Activated T-helper 2 cell treated with anti-CD3 and anti-CD28 coated beads, Interferon-gamma antibody, Interleukin-2, Interleukin-4, amounts not matched to agents 10 μg/mL and 5 μg/mL and 100 μg/mL, durations not matched to agents 14 hours and 24 hours and 36 hours (primary cell): ENCODE measurements at regions of chr14 and their contacts with region 1.

Region 1: DNA sequence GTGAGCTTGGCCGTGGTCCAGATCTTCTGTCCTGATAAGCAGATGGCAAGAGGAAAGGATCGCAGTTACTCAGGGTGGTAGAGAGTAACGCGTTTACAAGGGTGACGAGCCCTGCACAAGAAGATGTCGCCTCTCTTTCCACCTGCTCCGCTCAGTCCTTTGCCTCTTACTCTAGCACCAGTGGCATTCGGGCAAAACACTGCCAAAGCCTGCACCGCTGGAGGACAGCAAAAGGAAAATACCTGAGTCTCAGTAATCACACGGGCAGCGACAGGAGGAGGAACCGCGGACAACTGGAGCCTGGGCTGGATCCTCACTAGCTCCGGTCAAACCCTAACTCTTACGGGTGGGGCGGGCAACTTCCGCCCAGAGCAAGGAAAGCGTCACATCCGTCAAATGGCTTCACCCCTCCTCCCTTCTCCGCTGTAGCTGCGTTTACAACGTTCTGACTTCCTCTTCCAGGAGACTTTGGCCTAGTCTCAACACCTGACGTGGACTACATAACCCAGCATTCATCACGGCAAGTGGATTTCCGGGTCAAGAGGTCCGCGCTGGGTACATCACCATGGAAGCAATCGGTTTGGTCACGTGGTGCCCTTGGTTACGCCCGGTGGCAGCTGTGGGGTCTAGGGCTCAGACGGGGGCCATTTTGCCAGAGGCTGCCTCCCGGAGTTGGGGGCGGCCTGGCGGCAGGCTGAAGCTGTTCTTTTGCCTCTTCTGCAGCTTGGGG is at the starts of genes KLHL28 and TOGARAM1:
- DNase-seq: peak; percentile 95
- H3K4me3 Mint-ChIP-seq: no peak within 1 kb of the TSS
- H3K27ac Mint-ChIP-seq: no peak within 1 kb of the TSS
- H3K4me1 Mint-ChIP-seq: peaks cover 40% of the 10 kb centered on the region
- H3K27me3 Mint-ChIP-seq: no peaks in the 10 kb centered on the region
- total RNA-seq, gene KLHL28: 17.3 and 17.4 TPM in 2 replicates
- total RNA-seq, gene TOGARAM1: 7.3 and 11.1 TPM in 2 replicates

Region 2: DNA sequence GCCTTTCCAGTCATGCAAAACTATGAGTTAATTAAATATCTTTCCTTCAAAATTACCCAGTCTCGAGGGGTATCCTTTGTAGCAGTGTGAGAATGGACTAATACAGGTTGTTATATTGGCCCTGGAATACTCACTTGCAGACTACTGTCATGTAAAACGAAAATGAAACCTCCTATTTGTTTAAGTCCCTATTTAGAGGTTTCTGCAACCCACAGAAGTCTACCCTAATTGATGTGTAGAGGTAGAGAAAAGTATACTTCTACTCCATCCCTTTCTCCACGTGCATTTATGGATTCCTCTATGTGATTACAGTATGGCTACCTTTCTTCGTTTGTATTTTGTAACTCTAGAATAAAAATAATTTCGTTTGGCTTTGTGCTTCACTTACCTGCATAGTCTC is 825.8 kb before region 1 on chr14:
- intact Hi-C with region 1: no loop called
- DNase-seq: no peak
- H3K4me3 Mint-ChIP-seq: no peak overlapping the region
- H3K27ac Mint-ChIP-seq: no peak overlapping the region
- H3K4me1 Mint-ChIP-seq: no peaks in the 10 kb centered on the region
- H3K27me3 Mint-ChIP-seq: no peaks in the 10 kb centered on the region

Region 3: GRCh38 chr14:44897045-44897844 is 64.5 kb before region 1 on chr14:
- intact Hi-C with region 1: loop called (anchors 1 kb)
- DNase-seq: peak; percentile 86
- H3K4me3 Mint-ChIP-seq: peak overlapping the region; percentile 92
- H3K27ac Mint-ChIP-seq: peak overlapping the region; percentile 92
- H3K4me1 Mint-ChIP-seq: peaks cover 13% of the 10 kb centered on the region
- H3K27me3 Mint-ChIP-seq: no peaks in the 10 kb centered on the region

Region 4: GRCh38 chr14:44945264-44945663 is 16.5 kb before region 1 on chr14:
- intact Hi-C with region 1: loop called (anchors 2 kb)
- DNase-seq: no peak
- H3K4me3 Mint-ChIP-seq: no peak overlapping the region
- H3K27ac Mint-ChIP-seq: no peak overlapping the region
- H3K4me1 Mint-ChIP-seq: peaks cover 20% of the 10 kb centered on the region
- H3K27me3 Mint-ChIP-seq: no peaks in the 10 kb centered on the region

Region 5: GRCh38 chr14:44982594-44982993 is 20.8 kb after region 1 on chr14:
- intact Hi-C with region 1: loop called (anchors 2 kb)
- DNase-seq: no peak
- H3K4me3 Mint-ChIP-seq: no peak overlapping the region
- H3K27ac Mint-ChIP-seq: peak overlapping the region; percentile 26
- H3K4me1 Mint-ChIP-seq: peaks cover 16% of the 10 kb centered on the region
- H3K27me3 Mint-ChIP-seq: no peaks in the 10 kb centered on the region

Region 6: DNA sequence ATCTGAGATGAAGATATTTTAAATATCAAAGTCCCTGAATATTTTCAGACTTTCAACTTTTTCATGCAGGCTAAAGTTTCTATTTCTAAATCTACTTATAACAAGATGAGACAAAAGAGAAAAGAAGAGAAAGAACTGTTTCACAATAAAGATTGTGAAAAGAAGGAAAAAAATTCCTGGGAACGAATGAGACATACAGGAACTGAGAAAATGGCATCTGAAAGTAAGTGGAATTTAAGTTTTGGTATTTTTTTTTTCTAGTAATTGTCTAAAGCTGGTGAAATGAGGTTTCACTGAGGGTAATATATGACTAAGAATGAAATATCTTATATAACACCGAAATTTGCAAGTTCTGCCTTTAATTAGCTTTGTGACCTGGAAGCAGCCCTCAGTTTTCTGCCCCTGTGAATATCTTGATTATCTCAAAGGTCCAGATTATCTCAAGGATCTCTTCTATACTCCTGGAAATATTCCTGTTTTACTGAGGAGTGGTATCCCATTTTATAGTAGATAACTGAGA is 66.4 kb after region 1 on chr14:
- intact Hi-C with region 1: no loop called
- DNase-seq: no peak
- H3K4me3 Mint-ChIP-seq: no peak overlapping the region
- H3K27ac Mint-ChIP-seq: no peak overlapping the region
- H3K4me1 Mint-ChIP-seq: peaks cover 3% of the 10 kb centered on the region
- H3K27me3 Mint-ChIP-seq: no peaks in the 10 kb centered on the region

Region 7: DNA sequence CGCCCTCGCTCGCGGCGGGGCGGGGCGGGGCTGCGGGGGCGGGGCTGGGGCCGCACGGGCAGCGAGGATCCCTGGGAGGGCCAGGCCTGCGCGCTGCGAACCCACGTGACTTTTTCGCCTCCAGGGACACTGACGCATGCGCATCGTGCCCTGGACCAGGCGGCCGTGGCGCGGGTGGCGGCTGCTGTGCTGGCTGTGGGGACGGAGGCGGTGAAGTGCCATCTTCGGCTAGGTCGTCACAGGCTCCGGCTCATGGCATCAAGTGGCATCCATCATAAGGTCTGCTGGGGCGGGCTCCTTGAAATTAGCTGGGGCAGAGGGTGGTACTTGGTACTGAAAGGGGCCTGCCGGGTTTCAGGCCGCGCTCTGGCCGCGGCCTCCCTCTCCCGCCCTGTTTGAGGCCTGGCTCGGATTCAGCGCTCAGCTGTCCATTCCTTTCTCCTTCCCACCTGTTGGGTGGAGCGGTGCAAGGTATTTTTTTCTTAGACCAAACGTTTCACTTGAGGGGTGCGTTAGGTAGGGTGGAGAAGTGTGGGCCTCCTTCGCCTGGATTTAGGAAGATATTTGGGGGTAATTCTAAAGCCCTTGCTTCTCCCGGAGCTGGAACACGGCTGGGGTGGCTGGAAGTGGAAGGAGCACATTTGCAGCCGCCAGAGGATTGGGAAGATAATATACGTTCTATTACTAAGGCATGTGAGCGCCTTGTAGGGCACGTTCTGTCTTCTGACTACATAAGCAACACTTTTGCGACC is 122.4 kb after region 1 on chr14 and contains the start of gene PRPF39:
- intact Hi-C with region 1: loop called (anchors 1 kb)
- DNase-seq: peak; percentile 94
- H3K4me3 Mint-ChIP-seq: peak within 1 kb of the TSS; percentile 97
- H3K27ac Mint-ChIP-seq: peak within 1 kb of the TSS; percentile 97
- H3K4me1 Mint-ChIP-seq: peaks cover 46% of the 10 kb centered on the region
- H3K27me3 Mint-ChIP-seq: no peaks in the 10 kb centered on the region
- total RNA-seq, gene PRPF39: 47.6 and 47.8 TPM in 2 replicates

Region 8: GRCh38 chr14:45253068-45253753 is 291.4 kb after region 1 on chr14 and contains the start of gene MIS18BP1:
- intact Hi-C with region 1: loop called (anchors 1 kb)
- DNase-seq: peak; percentile 94
- H3K4me3 Mint-ChIP-seq: peak within 1 kb of the TSS; percentile 91
- H3K27ac Mint-ChIP-seq: peak within 1 kb of the TSS; percentile 98
- H3K4me1 Mint-ChIP-seq: peaks cover 21% of the 10 kb centered on the region
- H3K27me3 Mint-ChIP-seq: no peaks in the 10 kb centered on the region
- total RNA-seq, gene MIS18BP1: 56.4 and 62.9 TPM in 2 replicates

Region 9: DNA sequence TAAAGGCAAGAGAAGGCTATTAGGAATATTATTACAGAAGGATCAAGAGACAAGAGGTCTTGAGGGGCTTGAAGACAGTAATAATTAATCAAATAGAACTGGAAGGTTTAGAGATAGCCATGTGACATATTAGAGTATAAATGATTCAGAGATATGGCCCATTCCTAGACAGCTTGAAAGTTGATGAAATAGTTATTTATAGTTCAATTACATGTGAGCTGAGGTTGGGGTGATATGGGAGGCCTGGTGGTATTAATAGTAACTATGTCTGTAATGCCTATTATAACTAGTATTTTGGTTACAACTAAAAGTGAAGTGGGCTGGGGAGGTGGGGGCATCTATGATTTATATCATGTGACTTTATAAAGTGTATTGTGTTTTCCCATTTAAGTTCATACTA is 305.3 kb after region 1 on chr14:
- intact Hi-C with region 1: loop called (anchors 5 kb)
- DNase-seq: no peak
- H3K4me3 Mint-ChIP-seq: no peak overlapping the region
- H3K27ac Mint-ChIP-seq: no peak overlapping the region
- H3K4me1 Mint-ChIP-seq: peaks cover 3% of the 10 kb centered on the region
- H3K27me3 Mint-ChIP-seq: peaks cover 6% of the 10 kb centered on the region